Heart left ventricle (tissue), 16 donors: ENCODE measurements at regions of chr20 and their contacts with region 1.

Region 1: GRCh38 chr20:354298-355064 is 7.6 kb downstream of the NRSN2 start:
- DNase-seq: peak; percentile 72 to 84 (median 72)
- ATAC-seq: peak; percentile 85 to 95 (median 90)
- H3K4me3 ChIP-seq: no peak overlapping the region
- H3K27ac ChIP-seq: no peak overlapping the region
- H3K4me1 ChIP-seq: peaks cover 0 to 8% (median 0%) of the 10 kb centered on the region in 12 donors
- H3K27me3 ChIP-seq: no peaks in the 10 kb centered on the region
- CTCF ChIP-seq: peak; percentile 93 to 98 (median 96)
- POLR2A ChIP-seq: no peak

Region 2: GRCh38 chr20:407133-407952 is 52.9 kb after region 1 on chr20:
- intact Hi-C with region 1: loop called in 3 of 10 experiments (anchors 2 to 5 kb)
- DNase-seq: peak; percentile 78 to 88 (median 83)
- ATAC-seq: peak; percentile 75 to 86 (median 81)
- H3K4me3 ChIP-seq: peak overlapping the region; percentile 6 to 100 (median 96)
- H3K27ac ChIP-seq: peak overlapping the region; percentile 49 to 98 (median 95)
- H3K4me1 ChIP-seq: peaks cover 4 to 29% (median 19%) of the 10 kb centered on the region in 12 donors
- H3K27me3 ChIP-seq: no peaks in the 10 kb centered on the region
- CTCF ChIP-seq: peak in 8 of 12 donors; percentile 13 to 39 (median 23)
- POLR2A ChIP-seq: no peak

Region 3: DNA sequence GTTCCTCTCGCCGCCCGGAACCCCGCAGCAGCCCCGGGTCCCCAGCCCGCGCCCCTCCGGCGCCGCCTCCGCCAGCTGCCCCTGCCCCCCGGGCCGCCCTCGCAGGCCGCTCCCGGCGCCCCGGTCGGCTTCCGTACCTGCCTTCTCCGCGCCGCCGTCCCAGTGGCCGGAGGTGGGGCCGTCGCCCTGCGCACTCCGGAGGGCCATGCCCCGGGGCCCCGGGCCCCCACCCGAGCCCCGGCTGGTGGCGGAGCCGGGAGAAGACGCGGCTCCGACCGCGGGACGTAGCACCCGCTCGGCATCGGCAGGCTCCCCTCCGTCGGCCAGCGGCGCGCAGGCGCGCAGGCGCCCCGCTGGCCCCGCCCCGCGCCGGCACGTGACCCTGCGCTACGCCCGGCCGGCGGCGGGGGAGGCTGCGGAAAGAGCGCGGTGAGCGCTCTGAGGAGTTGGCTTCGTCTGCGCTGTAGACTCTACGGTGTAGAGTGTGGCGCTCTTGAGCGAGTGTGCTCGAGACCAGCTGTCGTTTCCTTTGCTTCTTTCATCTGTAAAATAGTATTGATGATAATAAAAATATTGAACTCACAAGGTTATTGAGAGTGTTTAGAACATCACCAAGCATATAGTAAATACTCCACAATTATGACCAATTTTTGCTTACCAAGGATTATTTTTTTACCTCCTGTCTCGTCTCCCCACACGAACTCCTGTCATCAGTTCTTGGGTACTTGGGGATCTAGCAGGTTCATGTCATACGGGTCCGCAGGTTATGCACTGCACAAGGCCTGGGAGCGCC is 107.9 kb after region 1 on chr20 and contains the start of gene TBC1D20:
- intact Hi-C with region 1: loop called in 2 of 10 experiments (anchors 2 to 5 kb)
- DNase-seq: peak; percentile 86 to 91 (median 90)
- ATAC-seq: peak; percentile 96 to 98 (median 98)
- H3K4me3 ChIP-seq: peak within 1 kb of the TSS; percentile 43 to 95 (median 86)
- H3K27ac ChIP-seq: peak within 1 kb of the TSS; percentile 81 to 98 (median 92)
- H3K4me1 ChIP-seq: peaks cover 10 to 48% (median 37%) of the 10 kb centered on the region in 12 donors
- H3K27me3 ChIP-seq: no peaks in the 10 kb centered on the region
- CTCF ChIP-seq: peak in 4 of 12 donors; percentile 24 to 41 (median 32)
- POLR2A ChIP-seq: peak; percentile 12 to 84
- total RNA-seq, gene TBC1D20: 19.0 to 38.9 (median 26.3) TPM

Region 4: DNA sequence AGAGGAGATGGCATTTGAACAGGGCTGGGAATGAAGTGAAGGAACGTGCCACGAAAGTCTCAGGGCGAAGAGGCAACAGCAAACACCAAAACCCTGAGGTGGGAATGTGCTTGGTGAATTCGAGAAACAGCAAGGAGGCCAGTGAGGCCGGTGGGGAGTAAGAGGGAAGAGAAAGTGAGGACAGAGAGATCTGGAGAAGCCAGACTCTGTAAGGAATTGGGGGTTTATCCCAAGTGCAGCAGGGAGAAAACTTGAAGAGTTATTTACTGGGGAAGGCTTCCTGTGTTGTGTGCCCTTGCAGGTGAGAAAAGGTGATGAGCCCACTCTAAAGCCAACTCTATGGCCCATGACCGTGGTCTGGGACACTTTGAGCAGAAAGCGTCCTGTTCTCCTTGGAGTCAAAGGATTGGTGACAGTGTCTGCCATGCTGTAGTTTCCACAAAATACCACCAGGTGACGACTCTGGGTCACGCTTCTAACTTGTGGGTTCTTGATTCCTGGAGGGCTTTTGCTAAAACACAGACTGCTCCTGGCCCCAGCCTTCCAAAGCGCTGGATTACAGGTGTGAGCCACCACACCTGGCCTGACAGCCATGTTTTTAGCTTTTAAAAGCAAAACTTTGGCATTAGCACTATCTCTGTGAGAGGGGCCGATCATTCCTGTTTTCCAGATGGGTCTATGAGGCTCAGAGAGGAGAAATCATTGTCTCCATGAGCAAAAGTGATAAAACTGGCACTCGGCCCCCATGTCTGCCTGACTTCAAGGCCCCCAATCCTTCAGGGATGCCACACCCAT is 207.2 kb after region 1 on chr20:
- intact Hi-C with region 1: loop called in 1 of 10 experiments (anchors 10 kb)
- DNase-seq: peak in 4 of 5 donors; percentile 66 to 76 (median 71)
- ATAC-seq: peak; percentile 70 to 90 (median 80)
- H3K4me3 ChIP-seq: no peak overlapping the region
- H3K27ac ChIP-seq: no peak overlapping the region
- H3K4me1 ChIP-seq: peaks cover 0 to 20% (median 1%) of the 10 kb centered on the region in 12 donors
- H3K27me3 ChIP-seq: no peaks in the 10 kb centered on the region
- CTCF ChIP-seq: peak; percentile 91 to 100 (median 99)
- POLR2A ChIP-seq: no peak

Region 5: GRCh38 chr20:667391-667964 is 313.0 kb after region 1 on chr20:
- intact Hi-C with region 1: loop called in 1 of 10 experiments (anchors 10 kb)
- DNase-seq: peak in 2 of 5 donors; percentile 60 to 75
- ATAC-seq: peak in 2 of 4 donors; percentile 45 to 51
- H3K4me3 ChIP-seq: no peak overlapping the region
- H3K27ac ChIP-seq: peak overlapping the region in 11 of 12 donors; percentile 6 to 80 (median 62)
- H3K4me1 ChIP-seq: peaks cover 0 to 53% (median 10%) of the 10 kb centered on the region in 12 donors
- H3K27me3 ChIP-seq: peaks cover 6 to 57% (median 39%) of the 10 kb centered on the region in 9 donors
- CTCF ChIP-seq: peak; percentile 71 to 92 (median 81)
- POLR2A ChIP-seq: no peak

Region 6: DNA sequence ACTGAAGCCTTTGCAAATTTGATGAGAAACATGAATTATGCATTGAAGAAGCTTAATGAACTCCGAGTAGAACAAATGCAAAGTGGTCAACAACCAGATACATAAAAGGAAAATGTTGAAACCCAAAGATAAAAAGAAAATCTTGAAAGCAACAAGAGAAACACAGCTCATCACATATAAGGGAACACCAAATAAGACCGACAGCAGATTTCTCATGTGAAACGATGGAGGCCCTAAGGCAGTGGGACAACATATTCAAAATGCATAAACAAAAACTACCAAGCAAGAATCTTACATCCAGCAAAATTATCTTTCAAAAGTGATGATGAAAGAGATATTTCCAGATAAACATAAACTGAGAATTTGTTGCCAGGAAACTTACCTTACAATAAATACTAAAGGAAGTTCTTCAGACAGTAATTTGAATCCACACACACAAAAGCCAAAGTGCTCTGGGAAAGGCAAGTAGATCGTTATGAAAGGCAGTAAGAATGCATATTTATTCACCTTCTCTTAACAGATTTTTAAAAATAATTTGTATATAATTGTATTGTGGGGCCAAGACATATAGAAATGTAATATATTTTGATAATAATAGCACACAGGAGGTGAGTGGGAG is 391.3 kb after region 1 on chr20:
- intact Hi-C with region 1: loop called in 1 of 10 experiments (anchors 10 kb)
- DNase-seq: no peak
- ATAC-seq: no peak
- H3K4me3 ChIP-seq: no peak overlapping the region
- H3K27ac ChIP-seq: no peak overlapping the region
- H3K4me1 ChIP-seq: no peaks in the 10 kb centered on the region
- H3K27me3 ChIP-seq: peaks cover 0 to 8% (median 0%) of the 10 kb centered on the region in 9 donors
- CTCF ChIP-seq: no peak
- POLR2A ChIP-seq: no peak